Right lobe of liver (tissue), 6 donors: ENCODE measurements at regions of chr2 and their contacts with region 1.

Region 1: GRCh38 chr2:112048887-112049286 is 6.2 kb upstream of the TMEM87B start:
- DNase-seq: no peak
- ATAC-seq: peak; percentile 89 to 94 (median 90)
- H3K4me3 ChIP-seq: no peak overlapping the region
- H3K27ac ChIP-seq: no peak overlapping the region
- H3K4me1 ChIP-seq: peaks cover 0 to 15% (median 7%) of the 10 kb centered on the region in 4 donors
- H3K27me3 ChIP-seq: no peaks in the 10 kb centered on the region
- CTCF ChIP-seq: peak; percentile 77 to 88 (median 86)
- POLR2A ChIP-seq: no peak

Region 2: GRCh38 chr2:111887819-111888223 is 161.1 kb before region 1 on chr2:
- intact Hi-C with region 1: loop called (anchors 5 kb)
- DNase-seq: peak; percentile 66 to 77 (median 73)
- ATAC-seq: peak; percentile 65 to 76 (median 68)
- H3K4me3 ChIP-seq: no peak overlapping the region
- H3K27ac ChIP-seq: no peak overlapping the region
- H3K4me1 ChIP-seq: peaks cover 0 to 6% (median 3%) of the 10 kb centered on the region in 4 donors
- H3K27me3 ChIP-seq: no peaks in the 10 kb centered on the region
- CTCF ChIP-seq: peak; percentile 66 to 81 (median 74)
- POLR2A ChIP-seq: no peak

Region 3: GRCh38 chr2:111897924-111898702 is 150.8 kb before region 1 on chr2 and contains the start of gene MERTK:
- intact Hi-C with region 1: loop called in 1 of 2 experiments (anchors 5 kb)
- DNase-seq: peak; percentile 95
- ATAC-seq: peak; percentile 88 to 93 (median 89)
- H3K4me3 ChIP-seq: peak within 1 kb of the TSS; percentile 67 to 82 (median 76)
- H3K27ac ChIP-seq: peak within 1 kb of the TSS; percentile 65 to 79 (median 65)
- H3K4me1 ChIP-seq: peaks cover 0 to 34% (median 16%) of the 10 kb centered on the region in 4 donors
- H3K27me3 ChIP-seq: no peaks in the 10 kb centered on the region
- CTCF ChIP-seq: peak; percentile 52 to 72 (median 62)
- POLR2A ChIP-seq: peak; percentile 88
- total RNA-seq, gene MERTK: 10.6 to 18.3 (median 13.1) TPM

Region 4: GRCh38 chr2:112343827-112344585 is 295.1 kb after region 1 on chr2:
- intact Hi-C with region 1: no loop called
- DNase-seq: no peak
- ATAC-seq: peak in 3 of 4 donors; percentile 36 to 69 (median 42)
- H3K4me3 ChIP-seq: no peak overlapping the region
- H3K27ac ChIP-seq: no peak overlapping the region
- H3K4me1 ChIP-seq: no peaks in the 10 kb centered on the region
- H3K27me3 ChIP-seq: no peaks in the 10 kb centered on the region
- CTCF ChIP-seq: no peak
- POLR2A ChIP-seq: no peak